HEK293 (cell line): ENCODE measurements at regions of chr19 and their contacts with region 1.

Region 1: GRCh38 chr19:33186431-33187182 is 7.5 kb upstream of the LRP3 start:
- H3K4me3 ChIP-seq: no peak overlapping the region
- H3K27ac ChIP-seq: no peak overlapping the region
- H3K4me1 ChIP-seq: peaks cover 5% of the 10 kb centered on the region; the same call in 1 of the 2 replicates
- CTCF ChIP-seq: no peak

Region 2: GRCh38 chr19:32924203-32924930 is 262.2 kb before region 1 on chr19:
- CTCF ChIA-PET with region 1: no interaction called
- POLR2A ChIA-PET with region 1: no interaction called
- H3K4me3 ChIP-seq: no peak overlapping the region
- H3K27ac ChIP-seq: no peak overlapping the region
- H3K4me1 ChIP-seq: no peaks in the 10 kb centered on the region
- CTCF ChIP-seq: no peak

Region 3: GRCh38 chr19:33118643-33119042 is 68.0 kb before region 1 on chr19:
- CTCF ChIA-PET with region 1: interaction called, 271 read pairs
- POLR2A ChIA-PET with region 1: no interaction called
- H3K4me3 ChIP-seq: no peak overlapping the region
- H3K27ac ChIP-seq: no peak overlapping the region
- H3K4me1 ChIP-seq: no peaks in the 10 kb centered on the region
- CTCF ChIP-seq: no peak

Region 4: DNA sequence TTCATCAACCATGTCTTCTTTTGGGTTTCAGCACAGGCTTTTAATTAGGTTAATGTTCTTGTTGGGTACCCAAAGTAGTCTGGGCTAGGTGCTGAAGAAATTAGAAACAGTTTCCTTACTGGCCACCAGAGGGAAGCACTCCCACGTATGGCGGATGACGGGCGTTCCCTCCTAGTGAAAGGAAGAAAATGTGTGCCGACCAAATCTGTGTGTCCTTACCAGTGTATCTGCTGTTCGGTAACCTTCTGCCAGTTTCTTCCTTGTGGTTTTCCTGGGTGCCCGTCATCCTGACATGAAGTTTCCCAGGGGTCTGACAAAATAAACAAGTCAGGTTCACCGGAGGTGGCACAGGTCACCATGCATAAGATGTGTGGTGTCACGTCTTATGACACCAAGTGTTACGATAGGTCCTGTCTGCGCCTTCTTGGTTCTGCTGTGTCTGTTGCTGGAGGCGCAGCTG is 60.6 kb before region 1 on chr19:
- CTCF ChIA-PET with region 1: interaction called, 271 read pairs
- POLR2A ChIA-PET with region 1: interaction called, 3 read pairs
- H3K4me3 ChIP-seq: no peak overlapping the region
- H3K27ac ChIP-seq: 0 out of 2 replicates have a peak overlapping the region, but pooled peaks have one; percentile 11
- H3K4me1 ChIP-seq: peaks cover 4% of the 10 kb centered on the region
- CTCF ChIP-seq: peak; percentile 86

Region 5: GRCh38 chr19:33156334-33156733 is 30.3 kb before region 1 on chr19:
- CTCF ChIA-PET with region 1: interaction called, 92 read pairs
- POLR2A ChIA-PET with region 1: no interaction called
- H3K4me3 ChIP-seq: no peak overlapping the region
- H3K27ac ChIP-seq: no peak overlapping the region
- H3K4me1 ChIP-seq: no peaks in the 10 kb centered on the region
- CTCF ChIP-seq: no peak

Region 6: DNA sequence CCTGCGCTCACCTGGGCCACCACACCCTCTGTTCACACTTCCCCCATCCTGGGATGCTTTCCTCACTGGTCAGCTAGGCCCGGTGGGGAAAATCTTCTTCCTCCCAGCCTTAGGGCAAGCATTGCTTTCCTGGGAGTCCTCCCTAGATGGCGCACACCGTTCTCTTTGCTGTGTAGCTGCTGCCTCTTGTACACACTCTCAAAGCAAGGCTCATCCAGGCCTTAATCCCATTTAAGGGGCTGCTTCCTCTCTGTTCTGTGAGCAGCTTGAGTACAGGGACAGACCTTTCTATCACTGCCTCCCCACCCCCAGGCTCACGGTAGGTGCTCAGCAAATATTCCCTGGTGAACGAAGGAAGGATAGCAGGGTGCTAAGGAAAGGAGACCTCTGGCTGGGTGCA is 28.0 kb after region 1 on chr19:
- CTCF ChIA-PET with region 1: interaction called, 19 read pairs
- POLR2A ChIA-PET with region 1: no interaction called
- H3K4me3 ChIP-seq: no peak overlapping the region
- H3K27ac ChIP-seq: peak overlapping the region; percentile 31; the same call in 1 of the 2 replicates
- H3K4me1 ChIP-seq: peaks cover 2% of the 10 kb centered on the region; the same call in 1 of the 2 replicates
- CTCF ChIP-seq: peak; percentile 82

Region 7: DNA sequence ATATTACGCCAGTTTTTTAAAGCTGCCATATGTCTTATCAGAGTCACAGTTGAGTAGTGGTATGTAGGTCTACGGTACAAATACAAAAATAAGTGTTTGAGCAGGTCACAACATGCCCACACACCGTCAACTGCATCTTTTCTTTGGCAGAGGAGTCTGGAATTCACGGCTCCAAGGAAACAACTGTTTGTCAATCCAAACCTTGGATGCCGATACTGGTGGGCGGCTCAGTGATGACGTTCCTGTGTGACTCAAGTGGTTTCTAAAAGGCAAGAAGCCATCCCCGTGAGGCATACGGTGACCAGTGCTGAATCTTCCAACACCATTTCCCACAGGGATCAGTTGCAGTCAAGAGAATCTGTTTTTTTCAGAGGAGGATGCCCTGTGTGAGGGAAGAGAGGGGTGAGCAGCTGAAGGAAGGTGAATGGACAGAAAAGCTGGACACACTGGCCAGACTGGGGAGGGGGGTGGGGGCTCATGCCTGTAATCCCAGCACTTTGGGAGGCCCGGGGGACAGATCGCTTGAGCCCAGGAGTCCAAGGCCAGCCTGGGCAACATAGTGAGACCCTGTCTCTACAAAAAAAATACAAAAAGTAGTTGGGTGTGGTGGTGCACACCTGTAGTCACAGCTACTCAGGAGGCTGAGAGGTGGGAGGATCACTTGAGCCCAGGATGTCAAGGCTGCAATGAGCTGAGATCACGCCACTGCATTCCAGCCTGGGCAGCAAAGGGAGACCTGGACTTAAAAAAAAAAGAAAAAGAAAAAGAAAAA is 164.1 kb after region 1 on chr19:
- CTCF ChIA-PET with region 1: no interaction called
- POLR2A ChIA-PET with region 1: no interaction called
- H3K4me3 ChIP-seq: no peak overlapping the region
- H3K27ac ChIP-seq: no peak overlapping the region
- H3K4me1 ChIP-seq: peaks cover 21% of the 10 kb centered on the region
- CTCF ChIP-seq: no peak